ENCODE measurements at regions of chr1 and their contacts with region 1.

Region 1: GRCh38 chr1:226062558-226063223 is at the start of gene H3-3A:
- DNase-seq: peak; percentile 99
- H3K4me3 Mint-ChIP-seq: peak within 1 kb of the TSS; percentile 99
- H3K27ac Mint-ChIP-seq: peak within 1 kb of the TSS; percentile 99
- H3K4me1 Mint-ChIP-seq: peaks cover 31% of the 10 kb centered on the region
- H3K27me3 Mint-ChIP-seq: no peaks in the 10 kb centered on the region
- total RNA-seq, gene H3-3A: 390 and 391 TPM in 2 replicates

Region 2: GRCh38 chr1:225467193-225468020 is 595.3 kb before region 1 on chr1:
- intact Hi-C with region 1: loop called (anchors 1 kb)
- DNase-seq: peak; percentile 95
- H3K4me3 Mint-ChIP-seq: peak overlapping the region; percentile 94
- H3K27ac Mint-ChIP-seq: peak overlapping the region; percentile 98
- H3K4me1 Mint-ChIP-seq: peaks cover 39% of the 10 kb centered on the region
- H3K27me3 Mint-ChIP-seq: no peaks in the 10 kb centered on the region

Region 3: DNA sequence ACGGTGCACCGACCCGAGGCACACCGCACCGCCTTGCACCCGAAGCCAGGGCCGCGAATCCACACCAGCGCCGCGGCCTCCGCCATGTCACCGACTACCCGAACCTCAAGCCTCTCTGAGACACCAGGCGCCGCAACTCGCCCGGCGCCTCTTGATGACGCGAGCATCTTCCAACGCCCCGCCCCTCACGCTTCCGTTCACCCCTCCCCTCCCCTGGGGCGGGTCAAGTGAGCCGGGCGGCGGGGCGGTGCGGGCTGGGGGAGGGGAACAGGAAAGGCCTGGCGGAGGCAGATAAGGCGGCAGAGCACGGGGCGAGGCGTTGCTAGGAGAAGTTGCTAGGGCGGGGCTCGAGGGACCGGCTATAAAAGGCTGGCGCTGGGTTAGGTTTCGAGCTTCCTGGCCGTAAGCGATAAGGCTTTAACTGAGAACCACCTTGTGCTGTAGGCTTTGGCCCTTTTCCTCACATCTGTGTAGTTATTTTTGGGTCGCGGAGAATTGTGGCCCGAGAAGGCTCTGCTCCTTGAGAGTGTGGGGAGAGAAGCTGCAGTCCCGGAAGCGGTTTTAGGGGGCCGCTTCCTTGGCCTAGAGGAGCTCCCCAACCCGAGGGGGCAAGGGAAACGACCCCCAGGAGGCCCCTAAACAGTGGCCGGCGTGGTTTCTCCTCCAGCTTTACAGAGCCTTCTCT is 63.3 kb before region 1 on chr1 and contains the start of gene SDE2:
- intact Hi-C with region 1: loop called (anchors 1 kb)
- DNase-seq: peak; percentile 100
- H3K4me3 Mint-ChIP-seq: peak within 1 kb of the TSS; percentile 97
- H3K27ac Mint-ChIP-seq: peak within 1 kb of the TSS; percentile 99
- H3K4me1 Mint-ChIP-seq: peaks cover 53% of the 10 kb centered on the region
- H3K27me3 Mint-ChIP-seq: no peaks in the 10 kb centered on the region
- total RNA-seq, gene SDE2: 26.9 and 27.1 TPM in 2 replicates

Region 4: GRCh38 chr1:226109829-226110248 is 47.1 kb after region 1 on chr1:
- intact Hi-C with region 1: loop called (anchors 2 kb)
- DNase-seq: peak; percentile 95
- H3K4me3 Mint-ChIP-seq: peak overlapping the region; percentile 89
- H3K27ac Mint-ChIP-seq: peak overlapping the region; percentile 80
- H3K4me1 Mint-ChIP-seq: peaks cover 24% of the 10 kb centered on the region
- H3K27me3 Mint-ChIP-seq: peaks cover 8% of the 10 kb centered on the region

Region 5: DNA sequence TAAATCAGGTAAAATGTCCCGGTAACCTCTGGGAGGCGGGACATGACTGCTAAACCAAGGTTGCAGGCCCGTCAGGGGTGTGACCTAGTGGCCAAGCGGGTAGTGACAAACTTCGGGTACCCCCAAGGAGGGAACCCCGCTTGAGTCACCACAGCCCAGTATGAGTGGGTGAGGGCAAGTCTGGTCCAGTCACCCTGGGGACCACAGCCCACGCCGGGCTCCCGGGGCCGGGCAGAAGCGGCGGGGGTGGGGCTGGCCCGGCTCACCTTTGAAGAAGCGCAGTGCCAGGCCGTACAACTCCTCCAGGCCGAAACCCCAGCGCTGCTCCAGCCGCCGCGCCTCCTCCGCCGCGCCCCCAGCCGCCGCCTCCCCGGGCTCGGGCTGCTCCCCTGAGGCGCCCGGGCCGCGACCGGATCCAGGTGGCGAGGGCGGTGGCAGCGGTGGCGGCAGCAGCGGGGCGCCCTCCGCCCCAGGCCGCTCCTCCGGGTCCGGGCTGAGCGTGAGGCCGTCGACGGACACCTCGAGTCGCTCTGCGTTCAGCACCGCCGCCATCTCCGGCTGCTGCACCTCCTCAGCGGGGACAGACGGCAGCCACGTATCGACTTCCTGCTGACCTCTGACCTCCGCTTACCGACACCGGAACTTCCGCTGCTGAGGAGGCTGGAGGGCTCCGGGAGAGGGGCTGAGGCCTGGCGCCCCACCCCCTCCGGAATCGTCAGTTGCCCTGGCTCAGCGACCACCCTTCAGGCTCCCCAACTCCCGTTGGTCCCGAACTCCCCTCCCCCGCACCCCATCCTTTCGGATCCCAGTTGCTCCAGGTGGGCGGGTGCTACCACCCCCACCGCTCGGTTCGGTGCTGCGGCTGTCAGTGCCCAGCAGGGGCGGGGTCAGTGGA is 123.7 kb after region 1 on chr1 and contains the start of gene ACBD3:
- intact Hi-C with region 1: loop called (anchors 1 kb)
- DNase-seq: peak; percentile 96
- H3K4me3 Mint-ChIP-seq: peak within 1 kb of the TSS; percentile 97
- H3K27ac Mint-ChIP-seq: peak within 1 kb of the TSS; percentile 92
- H3K4me1 Mint-ChIP-seq: peaks cover 29% of the 10 kb centered on the region
- H3K27me3 Mint-ChIP-seq: no peaks in the 10 kb centered on the region
- total RNA-seq, gene ACBD3: 21.8 and 23.9 TPM in 2 replicates

Measured in activated CD4-positive, alpha-beta T cell treated with anti-CD3 and anti-CD28 coated beads, Interleukin-2, amount 10 ng/mL, durations not matched to agents 24 days and 14 days (primary cell).